A673 (cell line): ENCODE measurements at regions of chr3 and their contacts with region 1.

Region 1: GRCh38 chr3:167350245-167350862 is 29.7 kb downstream of the ZBBX start:
- DNase-seq: peak; percentile 27
- H3K4me3 ChIP-seq: no peak overlapping the region
- H3K27ac ChIP-seq: no peak overlapping the region
- H3K4me1 ChIP-seq: no peaks in the 10 kb centered on the region
- H3K27me3 ChIP-seq: no peaks in the 10 kb centered on the region
- CTCF ChIP-seq: peak; percentile 68

Region 2: DNA sequence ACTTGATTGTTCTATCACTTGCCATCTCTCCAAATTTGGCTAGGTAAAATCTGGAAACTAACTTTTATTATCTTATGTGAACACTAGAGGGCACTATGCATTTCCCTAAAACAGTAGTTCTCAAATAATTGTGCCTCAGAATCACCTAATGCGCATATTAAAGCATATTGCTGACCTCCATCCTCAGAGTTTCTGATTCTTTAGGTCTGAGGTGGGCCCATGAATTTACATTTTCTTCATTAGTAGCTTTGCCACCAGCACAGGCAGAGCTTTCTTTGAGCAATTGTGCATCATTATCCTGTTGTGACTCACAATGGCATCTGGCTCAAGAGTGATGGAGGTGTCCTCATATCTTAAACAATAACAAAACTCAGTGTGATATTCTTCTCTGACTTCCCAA is 1495.7 kb before region 1 on chr3:
- CTCF ChIA-PET with region 1: interaction called, 3 read pairs
- POLR2A ChIA-PET with region 1: no interaction called
- intact Hi-C with region 1: loop called (anchors 5 kb)
- DNase-seq: peak; percentile 49
- H3K4me3 ChIP-seq: no peak overlapping the region
- H3K27ac ChIP-seq: no peak overlapping the region
- H3K4me1 ChIP-seq: peaks cover 7% of the 10 kb centered on the region
- H3K27me3 ChIP-seq: no peaks in the 10 kb centered on the region
- CTCF ChIP-seq: peak; percentile 70

Region 3: DNA sequence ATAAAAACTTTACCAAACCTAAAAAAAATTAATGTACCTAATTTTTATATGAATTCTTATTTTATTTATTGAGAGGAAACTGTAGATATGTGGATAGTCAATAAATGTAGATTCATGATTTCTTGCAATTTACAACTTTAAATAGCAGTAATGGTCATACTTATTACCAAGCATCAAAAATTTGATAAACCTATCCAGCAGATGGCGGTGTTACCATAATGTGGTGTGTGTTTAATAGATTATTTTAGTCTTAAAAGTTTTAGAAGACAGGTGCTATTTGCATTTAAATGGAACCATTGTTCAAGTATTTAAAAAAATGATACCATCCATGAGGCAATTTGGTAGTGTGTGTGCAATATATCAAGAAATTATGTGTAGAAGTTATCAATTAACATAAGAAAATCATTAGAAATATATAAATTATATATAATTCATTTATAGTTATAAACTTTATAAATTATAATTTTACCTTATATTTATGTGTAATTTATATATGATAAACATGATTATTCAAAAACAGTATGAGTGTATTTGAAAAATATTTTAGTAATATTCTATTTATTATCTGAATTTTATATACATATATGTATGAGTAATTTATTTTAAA is 1337.2 kb before region 1 on chr3:
- CTCF ChIA-PET with region 1: no interaction called
- POLR2A ChIA-PET with region 1: no interaction called
- intact Hi-C with region 1: loop called (anchors 1 kb)
- DNase-seq: peak; percentile 56
- H3K4me3 ChIP-seq: no peak overlapping the region
- H3K27ac ChIP-seq: no peak overlapping the region
- H3K4me1 ChIP-seq: no peaks in the 10 kb centered on the region
- H3K27me3 ChIP-seq: no peaks in the 10 kb centered on the region
- CTCF ChIP-seq: peak; percentile 65

Region 4: GRCh38 chr3:166722099-166722498 is 628.3 kb before region 1 on chr3:
- CTCF ChIA-PET with region 1: no interaction called
- POLR2A ChIA-PET with region 1: no interaction called
- intact Hi-C with region 1: no loop called
- DNase-seq: no peak
- H3K4me3 ChIP-seq: no peak overlapping the region
- H3K27ac ChIP-seq: no peak overlapping the region
- H3K4me1 ChIP-seq: no peaks in the 10 kb centered on the region
- H3K27me3 ChIP-seq: no peaks in the 10 kb centered on the region
- CTCF ChIP-seq: no peak

Region 5: DNA sequence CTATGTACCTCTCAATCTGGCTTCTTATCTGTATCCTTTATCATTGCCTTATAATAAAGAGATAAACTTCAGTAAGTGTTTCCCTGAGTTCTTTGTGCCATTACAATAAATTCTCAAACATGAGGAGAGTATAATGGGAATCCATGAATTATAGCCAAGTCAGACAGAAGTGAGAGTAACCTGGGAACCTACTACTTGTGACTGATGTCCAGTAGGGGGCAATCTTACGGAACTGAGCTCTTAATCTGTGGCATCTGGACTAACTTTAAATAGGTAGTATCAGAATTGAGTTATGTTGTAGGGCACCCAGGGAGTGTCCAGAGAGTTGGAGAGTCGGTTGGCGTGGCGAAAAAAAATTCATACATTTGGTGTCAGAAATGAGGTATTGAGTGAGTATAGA is 512.8 kb before region 1 on chr3:
- CTCF ChIA-PET with region 1: no interaction called
- POLR2A ChIA-PET with region 1: no interaction called
- intact Hi-C with region 1: loop called (anchors 10 kb)
- DNase-seq: peak; percentile 21
- H3K4me3 ChIP-seq: no peak overlapping the region
- H3K27ac ChIP-seq: no peak overlapping the region
- H3K4me1 ChIP-seq: no peaks in the 10 kb centered on the region
- H3K27me3 ChIP-seq: no peaks in the 10 kb centered on the region
- CTCF ChIP-seq: peak; percentile 60